ENCODE measurements at regions of chr2 and their contacts with region 1.

Region 1: DNA sequence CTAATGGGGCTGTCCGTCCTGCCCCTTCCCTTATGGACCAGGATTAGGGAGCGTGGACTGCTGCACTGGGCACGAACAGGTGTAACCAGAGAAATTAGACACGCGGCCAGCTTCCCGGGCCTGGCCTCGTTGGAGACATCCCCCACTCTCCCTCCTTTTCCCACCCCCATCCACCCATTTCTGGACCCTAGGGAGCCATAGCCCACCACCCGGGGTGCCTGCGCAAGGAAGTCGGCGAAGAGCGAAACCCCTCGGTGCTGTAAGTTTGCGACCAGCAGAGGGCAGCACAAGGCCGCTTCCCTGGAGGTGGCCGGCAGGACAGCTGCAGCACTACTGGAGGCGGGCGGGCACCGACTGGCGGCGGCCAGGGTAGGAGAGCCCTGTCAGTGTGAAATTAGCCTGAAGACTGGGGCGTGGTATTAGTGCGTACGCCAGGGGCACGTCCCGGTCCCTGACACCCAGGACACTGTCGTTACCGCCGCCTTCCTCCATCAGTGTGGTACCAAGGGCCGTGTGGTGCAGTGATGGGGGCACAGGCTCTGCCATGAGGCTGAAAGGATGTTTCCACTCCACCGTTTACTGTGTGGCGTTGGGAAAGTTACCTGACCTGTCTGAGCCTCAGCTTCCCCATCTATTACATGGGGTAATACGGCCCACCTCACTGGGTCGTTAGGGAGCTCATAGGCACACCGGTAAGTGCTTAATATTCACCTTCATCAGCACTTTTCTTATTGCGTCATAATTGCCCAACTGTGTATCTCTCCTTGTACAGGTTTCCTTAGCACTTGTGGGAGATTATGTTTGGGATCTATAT is 36.0 kb upstream of the CD207 start:
- DNase-seq: peak; percentile 79
- H3K4me3 Mint-ChIP-seq: no peak overlapping the region
- H3K27ac Mint-ChIP-seq: no peak overlapping the region
- H3K4me1 Mint-ChIP-seq: no peaks in the 10 kb centered on the region
- H3K27me3 Mint-ChIP-seq: peaks cover 36% of the 10 kb centered on the region

Region 2: DNA sequence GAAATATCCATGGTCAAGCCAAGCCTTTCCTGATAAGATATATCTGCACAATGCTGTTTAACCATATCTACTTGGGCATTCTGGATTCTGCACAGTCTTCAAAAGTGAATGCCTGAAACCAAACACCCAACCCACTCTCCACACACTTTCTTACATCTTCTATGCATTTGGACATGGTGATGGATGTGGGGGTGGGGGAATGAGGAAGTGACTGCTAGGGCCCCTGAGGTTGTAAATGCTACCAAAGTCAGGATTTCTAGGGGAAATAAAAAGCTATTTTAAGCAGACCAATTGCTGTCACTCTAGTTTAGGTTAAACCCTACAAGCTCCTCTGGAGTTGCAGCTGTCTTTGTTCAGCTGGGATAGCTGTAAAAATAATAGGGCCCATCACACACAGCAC is 291.3 kb before region 1 on chr2:
- CTCF ChIA-PET with region 1: no interaction called
- POLR2A ChIA-PET with region 1: no interaction called
- DNase-seq: no peak
- H3K4me3 Mint-ChIP-seq: no peak overlapping the region
- H3K27ac Mint-ChIP-seq: no peak overlapping the region
- H3K4me1 Mint-ChIP-seq: no peaks in the 10 kb centered on the region
- H3K27me3 Mint-ChIP-seq: peaks cover 23% of the 10 kb centered on the region

Region 3: DNA sequence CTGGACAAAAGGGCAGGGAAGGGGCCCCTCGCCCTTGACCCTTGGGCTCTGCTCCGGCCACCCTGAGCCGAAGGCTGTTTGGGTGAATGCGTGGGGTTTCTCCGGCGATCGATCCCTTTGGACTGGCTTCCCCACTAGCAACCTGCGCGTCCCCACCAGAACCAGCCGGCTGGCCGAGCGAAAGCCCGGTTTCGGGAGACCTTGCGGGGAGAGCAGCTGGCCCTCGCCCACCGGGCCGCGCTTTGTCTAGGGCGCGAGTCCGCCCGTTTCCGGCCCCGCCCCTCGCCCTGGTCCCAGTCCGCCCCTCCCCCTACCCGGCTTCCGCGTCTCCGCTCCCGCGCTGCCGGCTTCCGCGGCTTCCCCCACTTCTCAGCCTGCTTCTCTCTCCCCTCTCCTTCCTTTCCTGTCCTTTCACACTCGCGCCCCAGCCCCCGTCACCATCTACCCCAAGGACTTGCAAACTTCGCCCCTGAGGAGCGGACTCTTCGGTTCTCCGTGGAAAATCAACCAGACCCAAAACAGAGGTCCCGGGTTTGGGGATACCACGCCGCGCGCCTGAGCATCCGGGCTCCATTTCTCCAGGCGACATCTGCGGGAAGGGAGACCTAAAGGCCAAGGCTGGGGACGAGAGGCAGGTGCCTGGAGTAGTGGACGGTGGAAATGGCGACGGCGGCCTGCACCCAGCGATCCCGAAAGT is 16.1 kb after region 1 on chr2:
- CTCF ChIA-PET with region 1: interaction called, 15 read pairs
- POLR2A ChIA-PET with region 1: no interaction called
- DNase-seq: peak; percentile 38
- H3K4me3 Mint-ChIP-seq: peak overlapping the region; percentile 54
- H3K27ac Mint-ChIP-seq: no peak overlapping the region
- H3K4me1 Mint-ChIP-seq: peaks cover 26% of the 10 kb centered on the region
- H3K27me3 Mint-ChIP-seq: peaks cover 82% of the 10 kb centered on the region

Region 4: DNA sequence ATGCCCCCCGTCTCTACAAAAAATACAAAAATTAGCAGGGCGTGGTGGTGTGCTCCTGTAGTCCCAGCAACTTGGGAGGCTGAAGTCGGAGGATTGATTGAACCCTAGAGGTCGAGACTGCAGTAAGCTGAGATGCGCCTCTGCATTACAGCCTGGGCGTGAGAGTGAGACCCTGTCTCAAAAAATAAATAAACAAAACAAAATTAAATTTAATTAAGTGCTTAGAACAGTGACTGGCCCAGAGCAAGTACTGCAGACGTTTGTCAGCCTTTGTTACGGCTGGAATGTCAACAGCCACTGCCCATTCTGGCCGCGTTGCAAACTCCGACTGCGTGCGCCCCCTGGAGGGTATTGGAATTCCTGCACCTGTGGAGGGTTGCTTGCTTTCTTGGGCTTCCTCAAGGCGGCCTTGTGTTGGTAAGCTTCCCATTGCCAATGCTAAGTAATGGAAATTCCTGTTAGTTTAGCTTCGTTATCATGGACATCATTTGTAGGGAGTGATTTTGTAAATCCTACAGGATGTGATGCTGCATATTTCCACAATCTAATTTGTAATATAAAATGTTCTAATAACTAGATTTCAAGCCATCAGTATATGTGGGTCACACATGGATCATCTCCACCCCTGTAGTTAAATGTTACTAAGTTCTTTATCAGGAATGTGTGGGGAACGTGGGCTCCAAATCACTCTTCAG is 48.2 kb after region 1 on chr2:
- CTCF ChIA-PET with region 1: interaction called, 37 read pairs
- POLR2A ChIA-PET with region 1: no interaction called
- DNase-seq: peak; percentile 70
- H3K4me3 Mint-ChIP-seq: no peak overlapping the region
- H3K27ac Mint-ChIP-seq: no peak overlapping the region
- H3K4me1 Mint-ChIP-seq: no peaks in the 10 kb centered on the region
- H3K27me3 Mint-ChIP-seq: peaks cover 13% of the 10 kb centered on the region

Region 5: DNA sequence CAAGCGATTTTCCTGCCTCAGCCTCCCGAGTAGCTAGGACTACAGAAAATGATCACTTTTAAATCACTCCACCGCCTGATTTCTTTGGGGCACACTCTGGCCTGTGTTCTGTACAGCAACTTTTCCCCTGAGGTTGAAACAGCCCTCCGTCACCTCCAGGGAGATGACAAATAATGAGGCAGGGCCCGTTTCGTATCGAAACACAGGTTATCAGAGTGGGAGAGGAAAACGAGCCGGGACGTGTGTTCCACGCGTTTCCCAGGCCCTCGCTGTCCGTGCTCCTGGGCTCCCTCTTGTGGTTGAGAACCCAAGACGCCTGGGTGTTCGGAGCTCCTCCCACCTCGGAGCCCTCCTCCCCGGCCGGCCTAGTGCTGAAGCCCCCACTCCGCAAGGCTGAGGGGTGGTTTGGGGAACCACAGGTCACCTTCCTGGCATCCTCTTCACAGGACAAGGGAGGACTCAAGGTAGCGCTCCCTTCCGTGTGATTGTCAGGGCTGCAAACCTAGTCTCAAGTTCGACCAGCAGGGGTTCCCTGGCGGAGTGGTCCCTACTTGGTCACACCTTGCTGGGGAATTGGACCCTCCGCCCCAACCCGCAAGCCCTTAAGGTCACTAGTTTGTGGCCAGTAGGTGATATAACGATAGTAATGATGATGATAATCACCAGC is 76.9 kb after region 1 on chr2:
- CTCF ChIA-PET with region 1: interaction called, 54 read pairs
- POLR2A ChIA-PET with region 1: no interaction called
- DNase-seq: peak; percentile 73
- H3K4me3 Mint-ChIP-seq: peak overlapping the region; percentile 52
- H3K27ac Mint-ChIP-seq: no peak overlapping the region
- H3K4me1 Mint-ChIP-seq: peaks cover 11% of the 10 kb centered on the region
- H3K27me3 Mint-ChIP-seq: peaks cover 35% of the 10 kb centered on the region